ENCODE measurements at regions of chr20 and their contacts with region 1.

Region 1: GRCh38 chr20:8389381-8390036 is 257.4 kb downstream of the PLCB1 start:
- DNase-seq: no peak

Region 2: DNA sequence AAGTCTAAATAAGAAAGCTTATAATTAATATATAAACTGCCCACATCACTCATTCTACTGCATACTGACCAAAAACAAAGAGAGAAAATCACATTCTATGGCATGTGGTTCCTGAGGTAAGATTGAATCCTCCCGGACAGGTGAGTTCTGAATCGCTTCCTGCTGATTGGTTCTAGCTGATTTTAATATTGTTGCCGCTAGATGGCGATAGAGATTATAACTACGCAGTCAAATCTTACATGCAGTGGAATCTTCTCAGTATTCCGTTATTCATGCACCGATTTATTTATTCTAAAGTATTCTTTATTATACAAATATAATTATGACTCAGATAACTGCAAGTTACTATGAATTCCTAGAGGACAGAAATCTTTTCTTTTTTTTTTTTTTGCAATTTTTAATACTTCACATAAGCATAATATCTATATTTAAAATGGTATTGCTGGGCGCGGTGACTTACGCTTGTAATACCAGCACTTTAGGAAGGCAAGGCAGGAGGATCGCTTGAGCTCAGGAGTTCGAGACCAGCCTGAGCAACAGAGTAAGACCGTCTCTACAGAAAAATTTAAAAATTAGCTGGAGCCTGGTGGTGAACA is 345.7 kb before region 1 on chr20:
- intact Hi-C with region 1: loop called (anchors 10 kb)
- DNase-seq: no peak

Measured in cardiac septum (tissue), 1 donor.